ENCODE measurements at regions of chr9 and their contacts with region 1.

Region 1: GRCh38 chr9:34701769-34702736 is 7.9 kb downstream of the CCL21 start:
- DNase-seq: peak; percentile 68
- ATAC-seq: peak; percentile 82
- H3K4me3 Mint-ChIP-seq: peak overlapping the region; percentile 73
- H3K27ac Mint-ChIP-seq: no peak overlapping the region
- H3K4me1 Mint-ChIP-seq: peaks cover 8% of the 10 kb centered on the region
- H3K27me3 Mint-ChIP-seq: peaks cover 20% of the 10 kb centered on the region
- CTCF ChIP-seq: peak; percentile 27

Region 2: DNA sequence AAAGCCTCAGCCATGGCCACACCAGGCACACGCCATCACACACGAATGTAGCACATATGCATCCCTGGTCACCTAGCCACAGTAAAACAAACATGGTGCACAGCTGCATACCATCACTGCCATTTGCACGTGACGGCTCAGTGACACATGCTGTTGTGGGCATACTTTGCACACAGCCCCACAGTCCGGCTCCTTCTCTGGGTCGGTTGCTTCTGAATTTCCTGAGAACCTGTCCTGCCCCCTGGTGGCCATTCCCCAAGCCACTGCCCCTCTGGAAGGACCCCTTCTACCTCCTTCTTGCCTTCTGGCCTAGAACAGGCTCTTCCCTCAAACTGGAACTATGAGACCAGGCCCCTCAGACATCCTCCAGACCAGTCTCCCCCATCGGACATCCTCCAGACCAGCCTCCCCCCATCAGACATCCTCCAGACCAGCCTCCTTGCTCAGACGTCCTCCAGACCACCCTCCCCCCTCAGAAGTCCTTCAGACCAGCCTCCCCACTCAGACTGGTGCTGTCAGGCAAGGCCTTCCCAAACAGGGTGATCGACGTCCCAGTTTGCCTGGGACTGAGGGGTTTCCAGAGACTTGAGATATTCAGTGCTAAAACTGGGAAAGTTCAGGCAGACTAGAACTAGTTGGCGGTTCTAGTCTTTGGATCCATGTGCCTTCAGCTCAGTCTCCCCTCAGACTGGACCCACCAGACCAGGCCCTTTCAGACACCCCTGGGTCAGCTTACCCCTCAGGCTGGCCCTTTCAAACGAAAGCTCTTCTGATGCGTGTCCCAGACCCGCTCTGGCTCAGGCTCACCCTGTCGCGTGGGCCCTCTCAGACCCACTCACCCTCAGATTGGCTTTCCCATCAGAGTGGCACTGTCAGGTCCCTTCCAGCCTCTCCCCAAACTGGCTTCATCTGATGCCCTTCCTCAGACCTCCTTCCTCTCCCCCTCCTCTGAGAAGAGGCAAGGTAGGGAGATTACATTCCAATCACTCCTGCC is 154.9 kb before region 1 on chr9:
- CTCF ChIA-PET with region 1: no interaction called
- POLR2A ChIA-PET with region 1: no interaction called
- intact Hi-C with region 1: loop called (anchors 2 kb)
- DNase-seq: no peak
- ATAC-seq: peak; percentile 58
- H3K4me3 Mint-ChIP-seq: no peak overlapping the region
- H3K27ac Mint-ChIP-seq: no peak overlapping the region
- H3K4me1 Mint-ChIP-seq: no peaks in the 10 kb centered on the region
- H3K27me3 Mint-ChIP-seq: peaks cover 29% of the 10 kb centered on the region
- CTCF ChIP-seq: no peak

Region 3: GRCh38 chr9:34646211-34647083 is 55.6 kb before region 1 on chr9 and contains the start of gene GALT:
- CTCF ChIA-PET with region 1: interaction called, 18 read pairs
- POLR2A ChIA-PET with region 1: no interaction called
- intact Hi-C with region 1: loop called (anchors 1 kb)
- DNase-seq: peak; percentile 96
- ATAC-seq: peak; percentile 96
- H3K4me3 Mint-ChIP-seq: peak within 1 kb of the TSS; percentile 92
- H3K27ac Mint-ChIP-seq: peak within 1 kb of the TSS; percentile 80
- H3K4me1 Mint-ChIP-seq: peaks cover 25% of the 10 kb centered on the region
- H3K27me3 Mint-ChIP-seq: no peaks in the 10 kb centered on the region
- CTCF ChIP-seq: no peak
- total RNA-seq, gene GALT: 55.9 and 62.5 TPM in 2 replicates

Region 4: DNA sequence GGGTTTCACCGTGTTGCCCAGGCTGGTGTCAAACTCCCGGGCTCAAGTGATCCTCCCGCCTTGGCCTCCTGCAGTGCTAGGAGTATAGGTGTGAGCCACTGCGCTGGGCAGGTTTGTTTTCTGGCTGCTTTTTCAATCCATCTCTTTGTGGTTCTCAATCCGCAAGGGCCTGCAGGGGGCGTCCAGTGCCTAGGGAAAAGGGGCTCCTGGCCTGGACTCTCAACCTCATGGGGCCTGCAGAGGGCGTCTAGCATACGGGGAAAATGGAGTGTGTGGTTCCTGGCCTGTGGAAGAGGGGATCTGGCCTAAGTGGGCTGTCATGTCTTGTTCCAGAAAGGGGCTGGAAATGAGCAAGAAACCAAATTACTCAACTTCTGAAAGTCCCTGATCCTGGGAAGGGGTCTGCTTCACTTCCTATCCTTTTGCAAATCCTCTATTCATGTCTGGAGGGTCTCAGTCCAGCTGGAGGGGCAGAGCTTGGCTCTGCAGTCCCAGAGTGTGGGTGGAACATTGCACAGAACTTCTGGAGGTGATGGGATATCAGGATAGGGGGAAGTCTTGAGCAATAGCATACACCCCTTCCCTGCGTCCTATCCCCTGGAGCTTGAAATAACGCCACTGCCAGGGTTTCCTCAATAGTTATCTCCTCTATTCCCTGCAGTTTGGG is 26.9 kb before region 1 on chr9:
- CTCF ChIA-PET with region 1: no interaction called
- POLR2A ChIA-PET with region 1: no interaction called
- intact Hi-C with region 1: loop called (anchors 1 kb)
- DNase-seq: peak; percentile 24
- ATAC-seq: peak; percentile 71
- H3K4me3 Mint-ChIP-seq: no peak overlapping the region
- H3K27ac Mint-ChIP-seq: no peak overlapping the region
- H3K4me1 Mint-ChIP-seq: no peaks in the 10 kb centered on the region
- H3K27me3 Mint-ChIP-seq: no peaks in the 10 kb centered on the region
- CTCF ChIP-seq: no peak

Region 5: GRCh38 chr9:35481347-35481975 is 779.4 kb after region 1 on chr9:
- CTCF ChIA-PET with region 1: no interaction called
- POLR2A ChIA-PET with region 1: no interaction called
- intact Hi-C with region 1: loop called (anchors 1 kb)
- DNase-seq: no peak
- ATAC-seq: peak; percentile 66
- H3K4me3 Mint-ChIP-seq: no peak overlapping the region
- H3K27ac Mint-ChIP-seq: no peak overlapping the region
- H3K4me1 Mint-ChIP-seq: no peaks in the 10 kb centered on the region
- H3K27me3 Mint-ChIP-seq: peaks cover 10% of the 10 kb centered on the region
- CTCF ChIP-seq: no peak